Activated CD4-positive, alpha-beta memory T cell treated with anti-CD3 and anti-CD28 coated beads for 36 hours (primary cell): ENCODE measurements at regions of chr17 and their contacts with region 1.

Region 1: DNA sequence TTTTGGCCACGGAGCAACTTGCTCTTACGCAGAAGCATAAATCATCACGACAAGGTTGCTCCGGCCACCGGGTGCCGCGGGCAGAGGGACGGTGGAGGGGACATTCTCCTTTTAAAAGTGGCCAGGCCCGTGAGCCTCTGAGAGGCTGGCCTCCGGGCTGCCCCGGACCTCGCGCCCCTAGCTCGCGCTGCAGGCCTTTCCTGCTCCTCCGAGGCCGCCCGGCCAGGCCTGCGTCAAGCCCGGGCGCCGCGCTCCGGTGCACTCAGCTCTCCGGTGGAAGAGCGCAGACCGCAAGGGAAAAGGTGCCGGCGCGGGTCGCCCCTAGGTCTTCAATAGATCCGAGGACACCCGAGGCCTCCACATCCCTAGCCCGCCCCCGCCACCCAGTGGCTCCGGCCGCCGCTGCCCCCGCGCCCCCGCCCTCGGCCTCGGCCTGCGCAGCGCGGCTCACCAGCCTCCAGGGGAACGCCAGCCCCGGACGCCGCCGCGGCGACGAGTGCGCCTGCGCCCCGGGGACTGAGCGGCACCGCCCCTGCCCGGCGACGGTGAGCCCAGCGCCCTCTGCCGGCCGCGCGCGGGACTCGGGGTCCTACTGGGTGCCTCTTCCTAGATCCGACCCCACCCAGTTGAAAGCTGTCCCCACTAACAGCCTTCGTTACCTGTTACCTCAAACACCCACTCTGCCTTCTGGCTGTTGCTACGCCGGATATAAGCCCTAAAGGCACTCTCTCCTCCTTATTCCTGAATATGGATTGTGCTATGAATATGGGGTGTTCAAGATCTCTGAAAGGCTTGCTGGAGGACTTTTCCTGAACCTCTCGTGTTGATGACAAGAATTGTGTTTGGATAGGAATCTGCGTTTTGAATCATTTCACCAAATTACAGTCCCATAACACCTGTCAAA is at the start of gene LYRM9:
- DNase-seq: peak; percentile 93
- H3K4me3 Mint-ChIP-seq: peak within 1 kb of the TSS; percentile 74
- H3K27ac Mint-ChIP-seq: peak within 1 kb of the TSS; percentile 36
- H3K4me1 Mint-ChIP-seq: peaks cover 12% of the 10 kb centered on the region
- H3K27me3 Mint-ChIP-seq: peaks cover 14% of the 10 kb centered on the region
- total RNA-seq, gene LYRM9: 5.7 to 6.8 TPM

Region 2: GRCh38 chr17:27800522-27800921 is 92.6 kb before region 1 on chr17 and contains the start of gene NOS2:
- CTCF ChIA-PET with region 1: interaction called, 152 read pairs
- POLR2A ChIA-PET with region 1: interaction called, 13 read pairs
- intact Hi-C with region 1: loop called (anchors 1 kb)
- DNase-seq: no peak
- H3K4me3 Mint-ChIP-seq: no peak within 1 kb of the TSS
- H3K27ac Mint-ChIP-seq: no peak within 1 kb of the TSS
- H3K4me1 Mint-ChIP-seq: peaks cover 3% of the 10 kb centered on the region
- H3K27me3 Mint-ChIP-seq: peaks cover 13% of the 10 kb centered on the region
- total RNA-seq, gene NOS2: 0.07 TPM in 1 of 2 experiments, not detected in the other

Region 3: DNA sequence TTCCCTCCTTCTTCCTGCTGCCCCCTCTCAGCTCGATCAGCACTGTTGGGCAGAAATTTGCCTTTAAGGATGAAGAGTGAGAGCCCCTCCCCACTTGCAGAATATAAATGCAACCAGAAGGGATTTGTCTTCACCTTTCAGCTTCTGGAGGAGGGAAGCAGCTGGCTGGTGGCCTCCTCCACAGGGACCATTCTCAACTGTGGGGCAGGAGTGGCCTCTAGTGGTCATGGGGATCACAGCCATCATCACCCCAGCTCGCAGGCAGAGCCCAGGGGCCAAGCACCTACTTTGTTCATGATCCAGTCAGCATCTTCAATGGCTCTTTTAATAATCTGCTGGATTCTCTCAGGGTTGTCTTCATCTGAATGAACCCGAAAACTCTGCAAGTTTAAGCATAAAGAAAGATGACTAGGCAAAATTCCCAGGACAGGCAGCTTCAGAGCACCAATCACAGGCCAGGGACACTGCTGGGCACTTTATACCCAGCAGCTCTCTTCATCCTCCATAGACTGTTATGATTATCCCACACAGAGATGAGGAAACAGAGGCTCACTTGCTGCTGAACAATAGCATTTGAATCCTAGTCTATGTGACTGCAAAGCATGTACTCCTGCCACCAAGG is 13.0 kb before region 1 on chr17:
- CTCF ChIA-PET with region 1: interaction called, 66 read pairs
- POLR2A ChIA-PET with region 1: interaction called, 6 read pairs
- intact Hi-C with region 1: no loop called
- DNase-seq: peak; percentile 84
- H3K4me3 Mint-ChIP-seq: no peak overlapping the region
- H3K27ac Mint-ChIP-seq: no peak overlapping the region
- H3K4me1 Mint-ChIP-seq: peaks cover 16% of the 10 kb centered on the region
- H3K27me3 Mint-ChIP-seq: no peaks in the 10 kb centered on the region

Region 4: GRCh38 chr17:28252436-28252835 is 359.3 kb after region 1 on chr17:
- CTCF ChIA-PET with region 1: interaction called, 23 read pairs
- POLR2A ChIA-PET with region 1: no interaction called
- intact Hi-C with region 1: loop called (anchors 1 kb)
- DNase-seq: no peak
- H3K4me3 Mint-ChIP-seq: no peak overlapping the region
- H3K27ac Mint-ChIP-seq: no peak overlapping the region
- H3K4me1 Mint-ChIP-seq: peaks cover 8% of the 10 kb centered on the region
- H3K27me3 Mint-ChIP-seq: peaks cover 7% of the 10 kb centered on the region